IMR-90 (cell line): ENCODE measurements at regions of chr11 and their contacts with region 1.

Region 1: GRCh38 chr11:85718991-85719807 is 33.2 kb upstream of the CCDC89 start:
- DNase-seq: peak; percentile 100
- ATAC-seq: peak; percentile 93
- H3K4me3 ChIP-seq: peak overlapping the region; percentile 52
- H3K27ac ChIP-seq: peak overlapping the region; percentile 91
- H3K4me1 ChIP-seq: peaks cover 8% of the 10 kb centered on the region
- H3K27me3 ChIP-seq: no peaks in the 10 kb centered on the region
- CTCF ChIP-seq: no peak
- POLR2A ChIP-seq: peak; percentile 75
- RAD21 ChIP-seq: peak; percentile 13; the same call in 1 of the 2 replicates

Region 2: DNA sequence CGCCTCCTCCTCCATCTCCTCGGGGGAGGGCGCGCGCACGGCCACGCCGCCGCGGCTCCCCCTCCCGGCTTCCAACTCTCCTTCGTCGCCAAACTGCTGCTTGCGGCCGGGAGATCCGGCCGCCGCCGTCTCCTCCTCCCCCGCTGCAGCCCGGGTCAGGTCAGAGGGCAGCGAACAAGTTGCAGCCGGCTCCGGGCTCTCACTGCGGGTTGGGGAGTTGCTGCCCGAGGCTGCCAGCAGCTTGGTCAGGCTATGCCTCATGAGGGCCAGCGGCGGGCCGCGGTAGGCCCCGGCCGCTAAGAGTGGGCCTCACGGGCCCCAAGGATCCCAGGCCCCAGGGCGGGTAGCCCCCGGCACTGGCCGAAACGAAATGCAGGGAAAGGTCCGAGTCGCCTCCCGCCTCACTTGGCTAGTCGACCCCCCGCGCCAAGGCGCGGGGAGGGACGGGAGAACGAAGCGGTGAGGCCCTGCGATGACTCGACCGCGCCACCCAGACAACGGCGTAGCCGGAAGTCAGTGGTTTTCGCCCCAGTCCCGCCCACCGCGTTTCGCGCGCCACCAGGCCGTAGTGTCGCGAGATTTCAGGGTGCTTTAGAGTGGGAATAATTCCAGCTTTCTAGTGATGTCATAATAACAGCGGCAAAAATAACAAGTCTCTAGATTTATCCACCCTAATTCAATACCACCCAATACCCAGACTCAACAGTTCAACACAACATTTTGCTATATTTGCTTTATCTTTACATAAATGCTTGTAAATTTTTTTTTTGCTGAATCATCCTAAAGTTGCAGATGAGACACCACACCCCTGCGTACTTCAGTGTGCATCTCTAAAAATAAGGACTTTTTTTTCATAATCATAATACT is 54.4 kb before region 1 on chr11 and contains the start of gene CREBZF:
- CTCF ChIA-PET with region 1: no interaction called
- POLR2A ChIA-PET with region 1: interaction called, 4 read pairs
- dilution Hi-C with region 1: no loop called
- in situ Hi-C with region 1: no loop called
- intact Hi-C with region 1: loop called (anchors 2 kb)
- DNase-seq: peak; percentile 95
- ATAC-seq: peak; percentile 92
- H3K4me3 ChIP-seq: peak within 1 kb of the TSS; percentile 96
- H3K27ac ChIP-seq: peak within 1 kb of the TSS; percentile 85
- H3K4me1 ChIP-seq: no peaks in the 10 kb centered on the region; the same call in 1 of the 2 replicates
- H3K27me3 ChIP-seq: no peaks in the 10 kb centered on the region
- CTCF ChIP-seq: no peak
- POLR2A ChIP-seq: peak; percentile 94
- RAD21 ChIP-seq: no peak
- total RNA-seq, gene CREBZF: 12.5 and 24.4 TPM in 2 replicates

Region 3: GRCh38 chr11:85772695-85773094 is 53.5 kb after region 1 on chr11:
- CTCF ChIA-PET with region 1: no interaction called
- POLR2A ChIA-PET with region 1: no interaction called
- dilution Hi-C with region 1: no loop called
- in situ Hi-C with region 1: no loop called
- intact Hi-C with region 1: loop called (anchors 2 kb)
- DNase-seq: peak; percentile 87
- ATAC-seq: peak; percentile 65
- H3K4me3 ChIP-seq: no peak overlapping the region
- H3K27ac ChIP-seq: peak overlapping the region; percentile 98
- H3K4me1 ChIP-seq: peaks cover 16% of the 10 kb centered on the region
- H3K27me3 ChIP-seq: no peaks in the 10 kb centered on the region
- CTCF ChIP-seq: no peak
- POLR2A ChIP-seq: no peak
- RAD21 ChIP-seq: no peak

Region 4: GRCh38 chr11:85810871-85811611 is 91.8 kb after region 1 on chr11 and contains the start of gene SYTL2:
- CTCF ChIA-PET with region 1: interaction called, 3 read pairs
- POLR2A ChIA-PET with region 1: no interaction called
- dilution Hi-C with region 1: no loop called
- in situ Hi-C with region 1: no loop called
- intact Hi-C with region 1: loop called (anchors 5 kb)
- DNase-seq: peak; percentile 48
- ATAC-seq: peak; percentile 90
- H3K4me3 ChIP-seq: peak within 1 kb of the TSS; percentile 75
- H3K27ac ChIP-seq: peak within 1 kb of the TSS; percentile 40
- H3K4me1 ChIP-seq: peaks cover 16% of the 10 kb centered on the region
- H3K27me3 ChIP-seq: no peaks in the 10 kb centered on the region
- CTCF ChIP-seq: peak; percentile 3; the same call in 1 of the 2 replicates
- POLR2A ChIP-seq: peak; percentile 24; the same call in 1 of the 2 replicates
- RAD21 ChIP-seq: no peak
- total RNA-seq, gene SYTL2: 45.2 and 59.4 TPM in 2 replicates

Region 5: DNA sequence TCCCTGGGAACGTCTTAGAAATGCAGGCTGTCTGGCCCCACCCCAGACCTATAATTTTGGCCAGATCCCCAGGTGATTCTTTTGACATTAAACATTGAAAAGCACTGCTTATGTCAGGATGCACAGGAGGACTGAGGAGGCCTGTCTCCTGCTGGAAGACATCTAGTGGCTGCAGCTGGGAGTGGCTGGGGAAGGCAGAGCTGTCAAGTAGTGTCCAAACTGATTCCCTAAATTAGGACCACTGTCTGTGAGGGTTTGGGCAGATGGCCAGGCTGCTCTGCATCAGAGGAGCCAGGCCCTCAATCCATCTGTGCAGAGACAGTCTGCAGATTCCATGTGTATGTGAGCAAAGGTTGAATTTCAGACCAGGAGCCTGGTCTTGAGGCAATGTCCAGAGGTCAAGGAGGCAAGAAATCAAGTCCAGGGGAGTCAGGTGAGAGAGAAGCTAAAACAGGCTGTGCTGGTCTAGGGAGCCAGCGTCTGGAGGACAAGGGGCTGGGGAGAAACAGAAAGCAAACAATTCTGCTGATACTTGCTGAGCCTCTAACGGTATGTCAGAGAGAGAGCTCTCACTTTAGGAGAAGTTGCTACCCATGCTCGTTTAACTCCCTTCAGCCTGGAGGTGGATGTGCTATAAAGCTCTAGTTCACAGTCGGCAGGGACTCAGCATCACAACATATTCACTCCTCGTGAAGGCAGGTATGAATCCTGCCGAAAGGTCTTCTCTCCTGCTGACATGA is 107.1 kb after region 1 on chr11:
- CTCF ChIA-PET with region 1: no interaction called
- POLR2A ChIA-PET with region 1: no interaction called
- dilution Hi-C with region 1: no loop called
- in situ Hi-C with region 1: no loop called
- intact Hi-C with region 1: loop called (anchors 2 kb)
- DNase-seq: peak; percentile 47
- ATAC-seq: peak; percentile 44; the same call in 1 of the 2 replicates
- H3K4me3 ChIP-seq: no peak overlapping the region
- H3K27ac ChIP-seq: peak overlapping the region; percentile 51
- H3K4me1 ChIP-seq: peaks cover 34% of the 10 kb centered on the region
- H3K27me3 ChIP-seq: no peaks in the 10 kb centered on the region
- CTCF ChIP-seq: peak; percentile 47
- POLR2A ChIP-seq: no peak
- RAD21 ChIP-seq: peak; percentile 54